Posterior cingulate gyrus (tissue), 11 donors: ENCODE measurements at regions of chr5 and their contacts with region 1.

Region 1: DNA sequence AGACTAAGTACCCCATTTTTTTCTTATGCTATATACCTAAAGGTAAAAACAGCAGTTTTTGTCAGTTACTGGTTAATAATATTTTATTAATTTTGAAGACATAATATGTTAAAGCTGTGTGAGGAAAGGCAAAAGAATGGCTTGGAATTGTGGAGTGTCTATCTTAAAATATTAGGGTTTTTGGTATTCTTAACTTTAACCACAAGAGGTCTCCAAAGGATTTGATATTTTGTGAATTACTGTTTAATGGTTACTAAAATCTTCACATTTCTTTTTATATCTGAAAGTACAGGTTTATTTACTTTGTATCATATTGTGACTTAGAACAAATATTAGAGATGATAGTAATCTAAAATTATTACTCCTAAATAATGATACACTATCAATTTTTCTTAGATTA is 32.0 kb upstream of the DHFR start:
- DNase-seq: no peak

Region 2: GRCh38 chr5:80720181-80720580 is 33.4 kb after region 1 on chr5:
- intact Hi-C with region 1: no loop called
- DNase-seq: no peak

Region 3: DNA sequence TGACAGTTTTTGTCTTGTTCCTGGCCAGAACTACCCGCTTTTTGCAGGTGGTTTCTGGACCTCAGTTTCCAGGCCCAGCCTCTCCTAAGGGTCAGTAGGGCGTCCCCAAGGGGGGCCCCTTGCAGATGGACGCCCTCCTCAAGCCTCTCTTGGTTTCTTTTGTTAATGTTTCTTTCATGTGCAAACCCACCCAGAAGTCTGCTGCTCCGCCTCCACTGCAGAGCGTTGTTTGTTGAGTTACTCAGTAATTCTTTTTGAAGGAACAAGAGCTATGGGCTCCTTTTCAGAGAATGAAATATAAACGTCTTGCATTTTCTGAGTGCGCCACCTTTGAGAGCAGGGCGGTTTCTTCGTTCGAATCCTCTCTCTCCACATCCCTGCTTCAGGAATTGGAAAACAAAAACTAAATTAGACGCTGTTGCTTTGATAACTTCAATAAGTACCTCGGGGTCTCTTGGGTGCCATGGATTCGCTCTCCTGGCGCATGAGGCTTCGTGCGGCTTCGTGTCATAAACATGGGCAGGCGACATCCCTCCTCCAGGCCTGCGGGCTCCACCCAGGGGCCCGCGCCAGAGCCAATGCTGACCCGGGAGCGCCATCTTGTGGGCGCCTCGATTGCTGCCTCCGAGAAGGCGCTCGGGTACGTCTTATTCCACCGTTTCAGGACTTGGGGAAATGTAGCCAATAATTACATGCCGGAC is 508.0 kb after region 1 on chr5:
- intact Hi-C with region 1: loop called (anchors 1 kb)
- DNase-seq: peak; percentile 61 to 97 (median 85)

Region 4: DNA sequence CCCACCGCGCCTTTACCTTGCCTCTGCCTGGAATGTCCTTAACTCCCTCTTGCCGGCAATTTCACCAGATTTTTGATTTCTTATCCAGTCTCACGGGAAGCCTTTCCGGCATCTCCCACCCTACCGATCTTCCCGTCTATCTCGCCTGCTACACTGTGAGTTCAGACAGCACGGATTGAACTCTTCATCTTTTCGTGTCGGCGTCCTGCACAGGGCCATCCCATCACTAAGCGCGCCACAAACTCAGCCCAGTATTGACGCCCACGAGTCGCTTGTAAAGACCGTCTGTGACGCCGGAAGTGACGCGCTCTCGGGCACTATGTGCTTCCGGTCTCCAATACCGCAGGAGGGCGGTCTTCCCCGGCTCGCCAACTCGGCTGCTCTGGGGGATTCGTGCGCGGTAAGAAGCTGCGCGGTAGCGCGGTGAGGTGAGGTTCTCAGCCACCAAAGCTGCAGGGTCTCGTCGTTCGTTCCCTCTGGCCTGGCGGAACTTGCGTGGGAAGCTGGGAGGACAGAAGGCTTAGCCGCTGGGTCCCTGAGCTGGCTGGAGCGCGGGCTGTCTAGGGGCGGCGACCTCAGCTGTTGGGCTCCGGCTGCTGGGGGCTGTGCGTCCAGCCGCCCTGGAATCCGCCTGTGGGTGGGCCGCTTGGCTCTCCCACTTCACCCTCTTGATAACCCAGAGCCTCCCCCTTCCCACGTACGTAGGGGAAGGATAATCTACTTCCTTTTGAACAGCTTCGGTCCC is 614.7 kb after region 1 on chr5 and contains the start of gene ZCCHC9:
- intact Hi-C with region 1: loop called (anchors 2 kb)
- DNase-seq: peak; percentile 88 to 99 (median 92)